Activated T-helper 1 cell treated with anti-CD3 and anti-CD28 coated beads, Interleukin-12 subunit alpha, Interleukin-12 subunit beta, Interleukin-2, Interleukin-4 antibody, amounts not matched to agents 30 ng/mL and 10 ng/mL and 1 ng/mL, durations not matched to agents 14 hours and 24 hours and 36 hours (primary cell): ENCODE measurements at regions of chr17 and their contacts with region 1.

Region 1: GRCh38 chr17:34980681-34981537 is 597 bp downstream of the LIG3 start:
- DNase-seq: peak; percentile 78
- H3K4me3 Mint-ChIP-seq: peak overlapping the region; percentile 91
- H3K27ac Mint-ChIP-seq: peak overlapping the region; percentile 96
- H3K4me1 Mint-ChIP-seq: peaks cover 52% of the 10 kb centered on the region
- H3K27me3 Mint-ChIP-seq: no peaks in the 10 kb centered on the region

Region 2: GRCh38 chr17:34961093-34961911 is 19.6 kb before region 1 on chr17 and contains the starts of genes CCT6B and ZNF830:
- intact Hi-C with region 1: loop called (anchors 1 kb)
- DNase-seq: peak; percentile 88
- H3K4me3 Mint-ChIP-seq: peak within 1 kb of the TSS; percentile 100
- H3K27ac Mint-ChIP-seq: peak within 1 kb of the TSS; percentile 100
- H3K4me1 Mint-ChIP-seq: peaks cover 23% of the 10 kb centered on the region
- H3K27me3 Mint-ChIP-seq: no peaks in the 10 kb centered on the region
- total RNA-seq, gene CCT6B: 0.96 and 1.0 TPM in 2 replicates
- total RNA-seq, gene ZNF830: 28.0 and 29.7 TPM in 2 replicates

Region 3: DNA sequence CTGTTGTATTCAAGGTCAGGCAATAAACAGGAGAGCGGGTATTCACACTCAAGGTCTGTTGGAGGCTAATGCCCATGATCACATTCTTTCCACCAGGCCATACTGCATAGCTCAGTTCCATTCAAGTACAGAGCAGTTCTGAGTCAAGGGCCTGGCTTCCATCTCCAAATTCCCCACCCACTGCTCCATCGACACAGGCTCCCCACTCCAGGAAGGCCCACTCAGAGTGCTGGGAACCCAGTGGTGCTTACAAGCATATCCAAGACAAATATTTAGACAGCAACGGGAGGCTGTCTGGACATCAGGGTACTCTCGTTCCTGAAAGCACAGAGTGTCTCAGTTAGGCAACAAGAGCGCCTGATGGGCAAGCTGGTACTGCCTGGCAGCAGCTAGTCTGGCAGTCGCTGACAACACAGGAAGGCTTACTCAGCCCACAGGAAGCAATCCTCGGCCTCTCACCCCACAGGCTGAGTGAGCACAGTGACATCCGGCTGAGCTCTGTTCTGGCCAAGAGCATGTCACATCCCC is 41.7 kb after region 1 on chr17:
- intact Hi-C with region 1: loop called (anchors 5 kb)
- DNase-seq: peak; percentile 67
- H3K4me3 Mint-ChIP-seq: peak overlapping the region; percentile 79
- H3K27ac Mint-ChIP-seq: peak overlapping the region; percentile 99
- H3K4me1 Mint-ChIP-seq: peaks cover 70% of the 10 kb centered on the region
- H3K27me3 Mint-ChIP-seq: no peaks in the 10 kb centered on the region

Region 4: GRCh38 chr17:35063514-35064223 is 82.8 kb after region 1 on chr17 and contains the start of gene RFFL:
- intact Hi-C with region 1: loop called (anchors 1 kb)
- DNase-seq: peak; percentile 88
- H3K4me3 Mint-ChIP-seq: peak within 1 kb of the TSS; percentile 49
- H3K27ac Mint-ChIP-seq: peak within 1 kb of the TSS; percentile 87
- H3K4me1 Mint-ChIP-seq: peaks cover 66% of the 10 kb centered on the region
- H3K27me3 Mint-ChIP-seq: no peaks in the 10 kb centered on the region
- total RNA-seq, gene RFFL: 28.1 and 28.2 TPM in 2 replicates

Region 5: DNA sequence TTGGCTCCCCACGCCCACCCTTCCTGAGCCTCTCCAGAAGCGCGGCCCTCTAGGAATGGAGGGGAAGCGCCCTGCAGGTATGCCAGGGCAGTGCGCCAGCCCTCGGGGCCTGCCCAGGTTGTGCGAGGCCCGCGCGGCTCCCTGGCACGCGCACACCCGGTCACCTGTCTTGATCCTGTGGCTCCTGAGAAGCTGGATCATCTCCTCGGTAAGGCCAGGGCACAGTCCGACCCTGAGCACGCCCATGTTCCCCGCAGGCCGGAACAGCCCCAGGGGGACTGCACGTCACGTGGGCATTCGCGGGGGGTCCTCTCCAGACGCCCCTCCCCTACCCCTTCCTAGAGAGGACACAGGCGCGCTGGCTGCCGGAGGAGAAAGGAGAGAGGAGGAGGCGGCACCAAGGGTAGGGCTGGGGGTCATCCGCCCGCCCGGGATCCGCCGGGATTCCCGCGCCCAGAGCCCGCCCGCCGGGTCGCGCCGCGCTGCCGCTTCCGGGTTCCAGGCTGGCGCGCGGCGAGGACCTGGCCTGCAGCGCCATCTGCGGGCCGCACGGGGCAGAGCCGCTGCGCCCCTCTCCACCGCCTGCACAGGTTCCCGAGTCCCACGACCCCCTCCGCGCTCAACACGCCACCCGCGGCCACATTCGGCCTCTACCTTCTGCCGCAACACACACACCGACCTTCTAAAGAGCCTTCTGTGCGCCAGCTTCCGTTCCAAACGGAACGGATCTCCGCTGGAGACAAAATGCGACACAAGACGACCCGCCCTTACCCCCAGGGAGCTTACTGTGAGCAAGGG is 138.7 kb after region 1 on chr17 and contains the start of gene RAD51D:
- intact Hi-C with region 1: loop called (anchors 1 kb)
- DNase-seq: peak; percentile 73
- H3K4me3 Mint-ChIP-seq: peak within 1 kb of the TSS; percentile 96
- H3K27ac Mint-ChIP-seq: peak within 1 kb of the TSS; percentile 95
- H3K4me1 Mint-ChIP-seq: peaks cover 31% of the 10 kb centered on the region
- H3K27me3 Mint-ChIP-seq: no peaks in the 10 kb centered on the region
- total RNA-seq, gene RAD51D: 29.8 and 34.9 TPM in 2 replicates

Region 6: DNA sequence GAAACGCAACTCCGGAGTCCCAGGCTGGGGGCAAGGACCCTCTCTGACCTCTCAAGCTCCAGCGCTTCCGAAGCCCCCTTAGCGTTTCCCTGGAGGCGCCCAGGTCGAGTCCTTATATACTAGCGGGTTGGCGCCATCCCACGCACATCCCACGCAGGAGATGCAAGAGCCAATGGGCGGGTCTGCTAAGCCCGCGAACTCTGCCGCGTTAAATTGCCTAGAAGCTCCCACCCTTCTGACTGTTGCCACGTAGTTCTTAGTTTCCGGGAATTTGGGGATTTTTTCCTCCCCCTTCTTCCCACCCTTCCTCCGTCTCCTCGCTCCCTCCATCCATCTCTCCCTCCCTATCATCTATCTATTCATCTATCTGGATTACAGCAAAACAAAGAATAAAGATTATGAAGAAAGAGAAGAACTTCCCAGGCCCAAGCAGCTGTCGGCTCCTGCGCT is 392.6 kb after region 1 on chr17 and contains the start of gene SLFN11:
- intact Hi-C with region 1: loop called (anchors 10 kb)
- DNase-seq: peak; percentile 79
- H3K4me3 Mint-ChIP-seq: peak within 1 kb of the TSS; percentile 93
- H3K27ac Mint-ChIP-seq: peak within 1 kb of the TSS; percentile 95
- H3K4me1 Mint-ChIP-seq: peaks cover 66% of the 10 kb centered on the region
- H3K27me3 Mint-ChIP-seq: no peaks in the 10 kb centered on the region
- total RNA-seq, gene SLFN11: 70.8 and 76.0 TPM in 2 replicates